ENCODE measurements at regions of chr7 and their contacts with region 1.

Region 1: DNA sequence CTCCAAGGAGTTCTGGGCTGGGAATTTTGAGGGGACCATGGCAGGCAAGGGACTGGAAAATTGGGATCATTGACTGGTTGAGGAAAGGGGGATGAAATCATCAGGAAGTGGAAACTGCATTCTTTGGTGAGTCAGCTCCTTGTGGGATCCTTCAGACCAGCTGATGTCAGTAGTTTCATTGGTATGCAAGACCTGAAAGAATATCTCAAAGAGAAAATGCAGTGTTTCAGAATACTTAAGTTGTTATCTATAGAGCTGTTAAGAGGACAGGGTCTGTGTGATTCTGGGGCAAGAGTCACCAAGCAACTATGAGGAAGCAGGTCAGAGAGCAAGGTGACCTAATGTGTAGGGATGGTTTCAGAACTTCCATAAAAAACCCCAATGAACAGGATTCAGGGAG is 595.9 kb upstream of the AUTS2 start:
- DNase-seq: no peak

Region 2: DNA sequence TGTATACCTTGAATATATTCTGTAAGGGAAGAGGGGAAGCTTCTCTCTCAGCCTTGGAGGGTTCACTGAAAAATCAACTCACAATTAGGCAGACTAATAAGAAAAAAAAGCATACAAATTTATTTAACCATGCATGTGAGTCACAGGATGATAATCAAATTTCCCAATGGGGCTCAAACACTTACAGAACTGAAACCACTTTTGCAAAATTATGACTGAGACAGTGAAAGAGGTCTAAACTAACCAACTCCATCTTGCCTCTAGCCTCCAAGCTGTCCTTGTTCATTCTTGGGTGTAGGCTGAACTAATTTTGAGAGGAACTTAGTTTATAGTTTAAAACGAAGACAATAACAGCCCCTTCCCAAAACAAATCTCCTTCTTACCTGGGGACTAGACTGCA is 22.4 kb before region 1 on chr7:
- intact Hi-C with region 1: no loop called
- DNase-seq: no peak

Region 3: GRCh38 chr7:69038915-69039314 is 36.5 kb after region 1 on chr7:
- intact Hi-C with region 1: loop called in 1 of 2 experiments (anchors 1 kb)
- DNase-seq: no peak